Sciatic nerve (tissue), 2 donors: ENCODE measurements at regions of chr5 and their contacts with region 1.

Region 1: GRCh38 chr5:72020320-72021009 is 86.8 kb upstream of the MAP1B start:
- DNase-seq: no peak
- ATAC-seq: no peak

Region 2: GRCh38 chr5:71982717-71983395 is 37.6 kb before region 1 on chr5:
- intact Hi-C with region 1: loop called (anchors 2 kb)
- DNase-seq: no peak
- ATAC-seq: no peak

Region 3: GRCh38 chr5:72205431-72206009 is 185.1 kb after region 1 on chr5:
- intact Hi-C with region 1: no loop called
- DNase-seq: no peak
- ATAC-seq: no peak